Naive thymus-derived CD4-positive, alpha-beta T cell (primary cell): ENCODE measurements at regions of chr4 and their contacts with region 1.

Region 1: GRCh38 chr4:9146967-9147366 is 23.2 kb upstream of the FAM90A26 start:
- DNase-seq: no peak
- ATAC-seq: no peak
- H3K4me3 ChIP-seq: no peak overlapping the region
- H3K4me3 Mint-ChIP-seq: no peak overlapping the region
- H3K27ac ChIP-seq: no peak overlapping the region
- H3K27ac Mint-ChIP-seq: no peak overlapping the region
- H3K4me1 ChIP-seq: no peaks in the 10 kb centered on the region
- H3K4me1 Mint-ChIP-seq: peaks cover 0 to 10% (median 4%) of the 10 kb centered on the region in 7 donors
- H3K27me3 ChIP-seq: no peaks in the 10 kb centered on the region
- H3K27me3 Mint-ChIP-seq: no peaks in the 10 kb centered on the region

Region 2: GRCh38 chr4:7844594-7844991 is 1302.4 kb before region 1 on chr4:
- CTCF ChIA-PET with region 1: no interaction called
- POLR2A ChIA-PET with region 1: no interaction called
- intact Hi-C with region 1: no loop called
- DNase-seq: no peak
- ATAC-seq: no peak
- H3K4me3 ChIP-seq: no peak overlapping the region
- H3K4me3 Mint-ChIP-seq: peak overlapping the region in 2 of 10 donors; percentile 1 to 45
- H3K27ac ChIP-seq: no peak overlapping the region
- H3K27ac Mint-ChIP-seq: peak overlapping the region in 1 of 9 donors; percentile 25
- H3K4me1 ChIP-seq: peaks cover 4 to 6% of the 10 kb centered on the region in 2 donors
- H3K4me1 Mint-ChIP-seq: peaks cover 17 to 51% (median 46%) of the 10 kb centered on the region in 7 donors
- H3K27me3 ChIP-seq: no peaks in the 10 kb centered on the region
- H3K27me3 Mint-ChIP-seq: no peaks in the 10 kb centered on the region

Region 3: DNA sequence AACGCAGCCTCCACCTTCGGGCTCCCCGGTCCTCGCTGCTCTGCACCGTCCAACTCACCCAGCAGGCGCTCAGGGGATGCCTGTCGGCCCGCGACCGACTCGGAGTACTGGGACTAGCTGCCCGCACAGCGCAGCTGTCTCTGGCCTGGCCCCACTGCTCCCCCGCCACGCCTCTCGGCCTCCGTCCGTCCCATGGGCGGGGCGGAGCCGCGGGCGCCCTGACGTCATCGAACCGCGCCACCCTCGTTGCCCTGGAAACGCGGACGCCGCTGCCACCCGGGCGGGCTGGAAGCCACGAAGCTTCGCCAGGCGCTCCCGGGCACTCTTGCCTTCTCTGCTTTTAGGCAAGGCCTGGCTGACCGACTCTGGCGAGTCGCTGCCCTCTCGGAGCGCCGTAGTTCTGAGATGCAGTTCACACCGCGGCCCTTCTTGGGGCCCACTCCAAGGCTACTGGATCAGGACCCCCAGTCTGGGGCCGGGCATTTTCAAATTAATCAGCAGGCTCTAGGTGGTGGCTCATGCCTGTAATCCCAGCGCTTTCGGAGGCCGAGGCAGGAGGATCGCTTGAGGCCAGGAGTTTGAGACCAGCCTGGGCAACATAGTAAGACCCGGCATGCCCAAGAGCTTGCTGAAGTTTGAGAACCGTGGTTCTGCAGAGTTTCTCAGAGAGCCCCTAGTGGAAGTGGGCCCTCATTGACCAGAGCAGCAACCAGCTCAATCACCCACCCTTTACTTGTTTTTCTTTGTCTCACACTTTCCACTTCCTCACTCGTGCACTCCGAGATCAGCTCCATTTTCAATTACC is 718.5 kb before region 1 on chr4:
- CTCF ChIA-PET with region 1: no interaction called
- POLR2A ChIA-PET with region 1: no interaction called
- intact Hi-C with region 1: loop called in 1 of 2 experiments (anchors 2 kb)
- DNase-seq: peak; percentile 81 to 99 (median 91)
- ATAC-seq: peak; percentile 99
- H3K4me3 ChIP-seq: peak overlapping the region; percentile 95
- H3K4me3 Mint-ChIP-seq: peak overlapping the region; percentile 85 to 98 (median 95)
- H3K27ac ChIP-seq: peak overlapping the region; percentile 84
- H3K27ac Mint-ChIP-seq: peak overlapping the region; percentile 69 to 94 (median 92)
- H3K4me1 ChIP-seq: peaks cover 13 to 17% of the 10 kb centered on the region in 2 donors
- H3K4me1 Mint-ChIP-seq: peaks cover 15 to 54% (median 48%) of the 10 kb centered on the region in 7 donors
- H3K27me3 ChIP-seq: no peaks in the 10 kb centered on the region
- H3K27me3 Mint-ChIP-seq: no peaks in the 10 kb centered on the region

Region 4: GRCh38 chr4:8440492-8441341 is 706.2 kb before region 1 on chr4 and contains the starts of genes ACOX3 and TRMT44:
- CTCF ChIA-PET with region 1: no interaction called
- POLR2A ChIA-PET with region 1: no interaction called
- intact Hi-C with region 1: loop called in 1 of 2 experiments (anchors 2 kb)
- DNase-seq: peak; percentile 89 to 100 (median 97)
- ATAC-seq: peak; percentile 97
- H3K4me3 ChIP-seq: peak within 1 kb of the TSS; percentile 92
- H3K4me3 Mint-ChIP-seq: peak within 1 kb of the TSS; percentile 93 to 100 (median 96)
- H3K27ac ChIP-seq: peak within 1 kb of the TSS; percentile 89
- H3K27ac Mint-ChIP-seq: peak within 1 kb of the TSS; percentile 98 to 100 (median 99)
- H3K4me1 ChIP-seq: peaks cover 31 to 37% of the 10 kb centered on the region in 2 donors
- H3K4me1 Mint-ChIP-seq: peaks cover 62 to 89% (median 81%) of the 10 kb centered on the region in 7 donors
- H3K27me3 ChIP-seq: no peaks in the 10 kb centered on the region
- H3K27me3 Mint-ChIP-seq: peaks cover 0 to 2% (median 0%) of the 10 kb centered on the region in 5 donors
- total RNA-seq, gene ACOX3: 10.9 to 20.5 (median 14.8) TPM
- total RNA-seq, gene TRMT44: 28.5 to 33.7 (median 29.6) TPM

Region 5: DNA sequence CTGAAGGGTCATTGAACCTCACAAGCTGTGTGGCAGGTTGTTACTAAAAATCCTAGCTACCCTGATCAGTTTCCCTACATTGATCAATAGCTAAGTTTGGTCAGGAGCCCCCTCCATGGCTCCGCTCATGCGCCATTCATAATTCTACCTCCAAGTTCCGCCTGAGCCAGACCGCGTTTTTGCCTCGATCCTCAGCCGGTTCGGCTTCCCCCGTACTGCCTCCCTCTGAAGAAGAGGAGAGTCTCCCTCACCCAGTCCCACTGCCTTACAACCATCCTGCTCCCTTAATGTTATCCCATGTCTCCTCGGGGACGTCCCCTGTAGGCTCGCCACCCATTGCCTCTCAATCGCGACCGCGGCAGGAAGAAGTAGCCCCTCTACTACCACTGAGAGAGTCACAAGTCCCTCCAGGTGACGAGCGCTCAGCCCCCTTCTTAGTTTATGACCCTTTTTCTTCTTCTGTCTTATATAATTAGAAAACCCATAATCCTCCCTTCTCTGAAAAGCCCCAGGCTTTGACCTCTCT is 455.5 kb after region 1 on chr4:
- CTCF ChIA-PET with region 1: no interaction called
- POLR2A ChIA-PET with region 1: no interaction called
- intact Hi-C with region 1: loop called in 1 of 2 experiments (anchors 5 kb)
- DNase-seq: no peak
- ATAC-seq: no peak
- H3K4me3 ChIP-seq: no peak overlapping the region
- H3K4me3 Mint-ChIP-seq: peak overlapping the region in 9 of 10 donors; percentile 17 to 86 (median 48)
- H3K27ac ChIP-seq: no peak overlapping the region
- H3K27ac Mint-ChIP-seq: peak overlapping the region; percentile 30 to 98 (median 77)
- H3K4me1 ChIP-seq: peaks cover 9 to 13% of the 10 kb centered on the region in 2 donors
- H3K4me1 Mint-ChIP-seq: peaks cover 34 to 51% (median 48%) of the 10 kb centered on the region in 7 donors
- H3K27me3 ChIP-seq: no peaks in the 10 kb centered on the region
- H3K27me3 Mint-ChIP-seq: peaks cover 0 to 2% (median 0%) of the 10 kb centered on the region in 5 donors